A549 (cell line): ENCODE measurements at regions of chr17 and their contacts with region 1.

Region 1: DNA sequence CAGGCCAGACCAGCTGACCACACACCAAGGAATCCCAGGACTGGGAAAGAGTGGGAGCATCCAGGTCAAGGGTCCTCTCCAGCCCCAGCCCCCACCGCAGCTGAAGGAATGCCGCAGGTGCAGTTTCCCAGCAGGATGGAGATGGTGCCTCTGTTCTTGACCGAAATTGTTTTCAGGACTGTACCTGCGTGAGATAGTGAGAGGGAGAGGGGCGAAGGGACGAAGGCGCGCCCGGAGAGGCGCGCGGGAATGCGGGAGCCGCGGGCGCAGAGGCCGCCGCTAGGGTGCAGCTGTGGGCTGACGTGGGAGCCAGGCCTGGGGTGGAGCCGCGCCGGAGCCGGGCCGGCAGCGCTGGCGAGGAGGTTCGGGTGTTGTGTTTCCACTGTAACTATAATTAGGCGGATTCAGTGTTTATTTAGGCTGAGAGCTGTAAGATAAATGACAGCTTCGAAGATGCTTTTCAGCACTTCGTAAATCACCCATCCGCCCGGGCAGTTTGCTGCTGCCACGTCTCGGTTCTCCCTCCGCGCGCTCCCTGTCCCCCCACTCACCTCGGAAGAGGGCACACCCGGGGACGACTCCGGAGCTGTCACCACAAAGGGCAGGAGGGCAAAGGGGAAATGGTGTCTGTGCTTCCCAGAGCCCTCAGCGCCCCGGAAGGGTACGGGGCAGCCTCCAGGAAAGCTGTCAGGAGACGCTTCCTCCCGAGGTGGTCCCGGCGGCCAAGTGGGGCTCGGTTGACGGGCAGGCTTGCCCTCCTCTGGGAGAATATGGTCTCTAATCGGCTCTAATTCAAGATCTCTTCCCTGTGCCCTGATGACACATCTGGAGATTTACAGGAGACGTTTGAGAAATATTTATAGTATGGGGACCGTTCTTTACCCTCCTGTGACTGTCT is 38.2 kb downstream of the HOXB1 start:
- DNase-seq: peak; percentile 66 to 85
- ATAC-seq: peak; percentile 96 to 98
- H3K4me3 ChIP-seq: peak overlapping the region; percentile 25
- H3K27ac ChIP-seq: peak overlapping the region; percentile 43 to 72
- H3K4me1 ChIP-seq: peaks cover 14% of the 10 kb centered on the region; the same call in 2 of the 3 replicates
- CTCF ChIP-seq: peak; percentile 92
- EP300 ChIP-seq: no peak
- POLR2A ChIP-seq: no peak
- RAD21 ChIP-seq: peak; percentile 83 to 96

Region 2: DNA sequence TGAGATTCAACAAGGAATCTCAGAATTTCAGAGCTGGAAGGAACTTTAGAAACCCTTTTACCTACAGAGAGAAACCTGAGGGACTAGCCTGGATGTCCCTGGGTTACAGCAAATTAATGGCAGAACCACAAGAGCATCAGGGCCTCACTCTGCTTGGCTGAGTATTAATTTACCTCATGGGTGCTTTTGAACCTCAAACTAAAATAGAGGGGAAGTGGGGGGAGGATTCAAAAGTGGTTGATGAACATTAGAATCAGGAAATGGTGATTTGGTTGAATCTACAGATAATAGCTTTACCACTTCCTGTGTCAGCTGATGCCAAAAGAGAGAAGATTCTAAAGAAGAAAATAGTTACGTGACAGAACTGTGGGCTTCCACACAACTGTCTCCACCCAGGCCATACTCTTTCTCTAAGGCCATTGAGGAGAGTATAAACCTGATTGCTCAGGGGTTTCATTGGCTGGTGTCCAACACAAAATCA is 51.4 kb before region 1 on chr17:
- CTCF ChIA-PET with region 1: interaction called, 13 read pairs
- POLR2A ChIA-PET with region 1: no interaction called
- DNase-seq: no peak
- ATAC-seq: no peak
- H3K4me3 ChIP-seq: no peak overlapping the region
- H3K27ac ChIP-seq: no peak overlapping the region
- H3K4me1 ChIP-seq: no peaks in the 10 kb centered on the region
- CTCF ChIP-seq: no peak
- EP300 ChIP-seq: no peak
- POLR2A ChIP-seq: no peak
- RAD21 ChIP-seq: no peak

Region 3: GRCh38 chr17:48478224-48479013 is 14.2 kb before region 1 on chr17:
- CTCF ChIA-PET with region 1: interaction called, 27 read pairs
- POLR2A ChIA-PET with region 1: no interaction called
- DNase-seq: no peak
- ATAC-seq: peak; percentile 54 to 66; a peak in 4 of 6 replicates
- H3K4me3 ChIP-seq: no peak overlapping the region
- H3K27ac ChIP-seq: no peak overlapping the region
- H3K4me1 ChIP-seq: peaks cover 4% of the 10 kb centered on the region
- CTCF ChIP-seq: no peak
- EP300 ChIP-seq: no peak
- POLR2A ChIP-seq: no peak
- RAD21 ChIP-seq: no peak

Region 4: GRCh38 chr17:48513097-48513496 is 20.4 kb after region 1 on chr17:
- CTCF ChIA-PET with region 1: interaction called, 20 read pairs
- POLR2A ChIA-PET with region 1: no interaction called
- DNase-seq: no peak
- ATAC-seq: no peak
- H3K4me3 ChIP-seq: no peak overlapping the region
- H3K27ac ChIP-seq: no peak overlapping the region
- H3K4me1 ChIP-seq: peaks cover 21% of the 10 kb centered on the region; the same call in 2 of the 3 replicates
- CTCF ChIP-seq: no peak
- EP300 ChIP-seq: no peak
- POLR2A ChIP-seq: no peak
- RAD21 ChIP-seq: no peak

Region 5: DNA sequence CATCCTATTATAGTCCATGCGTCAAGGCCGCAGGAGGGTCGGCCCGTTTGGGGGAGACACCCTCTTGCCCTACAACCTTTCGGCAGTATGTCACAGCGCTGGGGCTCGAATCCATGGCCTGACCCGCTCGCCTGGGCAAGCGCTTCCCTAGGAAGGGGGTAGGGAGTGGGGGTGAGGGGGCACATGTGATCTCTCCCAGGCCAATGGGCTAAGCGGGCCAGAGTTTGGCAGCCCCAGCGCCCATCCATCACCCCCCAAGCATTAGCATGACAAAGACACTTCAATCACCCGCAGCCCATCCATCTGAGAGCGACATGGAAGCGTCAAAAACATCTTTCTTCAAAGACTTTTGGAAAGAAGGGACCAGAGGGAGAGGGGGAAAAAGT is 38.2 kb after region 1 on chr17 and contains the start of gene HOXB1:
- CTCF ChIA-PET with region 1: interaction called, 18 read pairs
- POLR2A ChIA-PET with region 1: no interaction called
- DNase-seq: no peak
- ATAC-seq: no peak
- H3K4me3 ChIP-seq: no peak within 1 kb of the TSS
- H3K27ac ChIP-seq: no peak within 1 kb of the TSS
- H3K4me1 ChIP-seq: no peaks in the 10 kb centered on the region
- CTCF ChIP-seq: no peak
- EP300 ChIP-seq: no peak
- POLR2A ChIP-seq: no peak
- RAD21 ChIP-seq: no peak
- polyA plus RNA-seq, gene HOXB1: not detected in 2 replicates

Region 6: GRCh38 chr17:48561884-48562810 is 69.5 kb after region 1 on chr17:
- CTCF ChIA-PET with region 1: interaction called, 13 read pairs
- POLR2A ChIA-PET with region 1: no interaction called
- DNase-seq: peak in 1 of 2 experiments; percentile 66
- ATAC-seq: peak; percentile 74 to 87
- H3K4me3 ChIP-seq: no peak overlapping the region
- H3K27ac ChIP-seq: no peak overlapping the region
- H3K4me1 ChIP-seq: peaks cover 10% of the 10 kb centered on the region
- CTCF ChIP-seq: no peak
- EP300 ChIP-seq: no peak
- POLR2A ChIP-seq: no peak
- RAD21 ChIP-seq: no peak

Region 7: DNA sequence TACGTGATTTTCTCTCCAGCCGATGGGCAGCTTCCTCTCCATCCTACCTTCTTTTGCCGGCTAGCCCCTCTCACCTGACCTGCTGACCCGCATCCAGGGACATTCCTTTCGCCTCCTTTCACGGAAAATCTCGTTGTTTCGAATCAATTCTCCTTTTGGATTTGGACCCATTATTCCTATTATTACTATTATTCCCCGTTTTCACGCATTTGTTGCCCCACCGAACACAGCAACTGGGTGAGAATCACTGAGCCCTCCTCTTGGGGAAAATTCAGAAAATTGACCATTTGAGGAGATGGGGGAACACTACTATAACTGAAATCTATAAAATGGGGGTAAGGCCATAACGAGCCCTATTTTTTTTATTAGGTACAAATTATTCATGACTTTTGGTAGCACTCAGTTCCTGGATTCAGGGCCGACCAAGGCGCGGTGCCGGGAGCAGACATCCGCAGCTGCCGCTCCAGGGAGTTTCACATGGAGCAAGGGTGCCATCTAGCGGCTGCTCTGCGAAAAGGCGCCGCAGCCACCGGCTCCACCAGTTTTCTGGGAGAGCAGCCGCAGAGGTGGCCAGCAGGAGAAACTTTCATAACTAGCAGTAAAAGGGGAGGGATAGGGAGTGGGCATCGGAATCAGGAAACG is 125.7 kb after region 1 on chr17:
- CTCF ChIA-PET with region 1: interaction called, 11 read pairs
- POLR2A ChIA-PET with region 1: no interaction called
- DNase-seq: peak; percentile 86 to 97
- ATAC-seq: peak; percentile 74 to 78
- H3K4me3 ChIP-seq: no peak overlapping the region
- H3K27ac ChIP-seq: no peak overlapping the region
- H3K4me1 ChIP-seq: peaks cover 12% of the 10 kb centered on the region
- CTCF ChIP-seq: peak; percentile 99
- EP300 ChIP-seq: no peak
- POLR2A ChIP-seq: no peak
- RAD21 ChIP-seq: peak; percentile 97 to 99

Region 8: GRCh38 chr17:48663134-48663924 is 170.7 kb after region 1 on chr17:
- CTCF ChIA-PET with region 1: no interaction called
- POLR2A ChIA-PET with region 1: no interaction called
- DNase-seq: no peak
- ATAC-seq: peak; percentile 73 to 83
- H3K4me3 ChIP-seq: no peak overlapping the region
- H3K27ac ChIP-seq: no peak overlapping the region
- H3K4me1 ChIP-seq: no peaks in the 10 kb centered on the region
- CTCF ChIP-seq: no peak
- EP300 ChIP-seq: no peak
- POLR2A ChIP-seq: no peak
- RAD21 ChIP-seq: 0 out of 5 replicates have a peak, but pooled peaks of 1 of the 2 experiments have one; percentile 11

Region 9: DNA sequence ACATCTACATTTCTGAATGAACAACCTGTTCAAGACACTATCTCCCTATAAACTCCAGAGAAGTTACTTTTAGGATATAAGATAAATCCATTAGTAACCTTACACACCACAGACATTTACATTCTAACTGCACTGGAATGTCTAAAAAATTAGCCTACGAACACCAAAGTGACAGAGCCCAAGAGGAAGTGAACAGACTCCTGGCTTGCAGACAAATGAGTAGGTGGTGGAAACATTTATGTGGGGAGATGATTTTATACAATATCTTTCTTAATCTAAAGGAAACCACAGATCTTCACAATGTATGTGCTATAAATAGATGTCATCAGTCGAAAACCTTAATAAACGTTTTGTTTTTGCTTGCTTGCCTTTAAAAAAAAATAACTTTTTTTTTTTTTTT is 850.6 kb after region 1 on chr17:
- CTCF ChIA-PET with region 1: no interaction called
- POLR2A ChIA-PET with region 1: no interaction called
- DNase-seq: no peak
- ATAC-seq: no peak
- H3K4me3 ChIP-seq: no peak overlapping the region
- H3K27ac ChIP-seq: no peak overlapping the region
- H3K4me1 ChIP-seq: no peaks in the 10 kb centered on the region
- CTCF ChIP-seq: no peak
- EP300 ChIP-seq: no peak
- POLR2A ChIP-seq: no peak
- RAD21 ChIP-seq: no peak